Cardiac septum (tissue), 1 donor: ENCODE measurements at regions of chr12 and their contacts with region 1.

Region 1: DNA sequence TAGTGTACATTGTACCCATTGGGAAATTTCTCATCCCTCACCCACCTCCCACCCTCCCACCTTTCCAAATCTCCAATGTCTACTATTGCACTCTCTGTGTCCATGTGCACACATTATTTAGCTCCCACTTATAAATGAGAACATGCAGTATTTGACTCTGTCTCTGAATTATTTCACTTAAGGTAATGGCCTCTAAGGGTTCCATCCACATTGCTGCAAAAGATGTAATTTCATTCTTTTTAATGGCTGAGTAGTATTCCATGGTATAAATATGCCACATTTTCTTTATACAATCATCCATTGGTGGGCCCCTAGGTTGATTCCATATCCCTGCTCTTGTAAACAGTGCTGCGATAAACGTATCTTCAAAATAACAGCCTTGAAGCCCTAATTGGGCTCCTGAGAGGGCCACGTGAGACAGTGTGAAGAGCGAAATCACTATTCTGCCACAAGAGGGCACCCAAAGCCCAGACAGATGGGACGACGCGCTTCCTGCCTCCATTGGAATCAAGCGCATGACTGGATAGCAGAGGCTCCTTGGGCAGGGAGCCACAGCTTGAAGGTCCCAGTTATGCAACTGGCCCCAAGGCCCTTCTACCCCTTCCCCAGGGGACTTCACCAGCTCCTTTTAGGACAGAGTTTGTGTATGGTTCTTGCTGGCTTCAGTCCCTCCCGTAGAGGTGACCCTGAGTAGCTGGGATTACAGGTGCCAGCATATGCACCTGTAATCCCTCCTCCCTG is 21.3 kb upstream of the CD27 start:
- DNase-seq: peak; percentile 91

Region 2: DNA sequence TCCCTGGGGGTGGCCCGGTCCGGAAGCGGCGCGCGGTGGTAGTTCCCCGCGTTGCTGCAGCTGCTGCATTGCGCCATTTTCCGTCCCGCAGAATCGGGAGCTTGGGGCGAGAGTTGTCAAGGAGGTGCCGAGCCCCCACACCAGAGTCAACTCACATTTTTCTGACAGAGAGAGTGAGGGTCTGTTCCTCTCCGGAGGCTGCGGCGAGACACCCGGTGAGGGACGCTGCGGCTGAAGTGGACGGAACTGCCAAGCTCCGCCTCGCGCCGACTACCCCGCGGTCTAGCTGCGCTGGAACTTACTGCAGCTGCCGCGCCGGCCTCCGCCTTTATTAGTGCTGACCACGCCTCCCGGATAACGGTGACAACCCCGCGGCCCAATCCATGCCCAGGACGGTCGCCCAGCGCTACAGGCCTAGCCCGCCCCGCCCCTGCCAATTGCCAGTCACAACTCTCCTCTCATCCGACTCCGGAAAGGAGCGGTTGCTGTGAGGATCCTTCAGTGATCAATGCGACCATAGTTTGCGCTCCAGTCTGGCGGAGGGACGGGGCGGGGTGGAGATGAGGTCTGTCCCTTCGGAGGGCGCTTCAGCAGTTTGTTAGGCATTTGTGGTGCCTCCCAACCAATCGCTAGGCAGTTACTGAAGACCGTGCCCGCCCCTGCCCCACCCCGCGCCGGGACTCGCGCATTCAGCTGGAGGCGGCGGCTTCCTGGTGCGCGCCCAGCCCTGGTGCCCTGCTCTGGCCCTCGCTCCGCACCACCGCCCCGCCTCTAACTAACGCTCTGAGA is 47.1 kb after region 1 on chr12 and contains the start of gene VAMP1:
- intact Hi-C with region 1: loop called (anchors 1 kb)
- DNase-seq: peak; percentile 99
- total RNA-seq, gene VAMP1: 4.1 TPM

Region 3: DNA sequence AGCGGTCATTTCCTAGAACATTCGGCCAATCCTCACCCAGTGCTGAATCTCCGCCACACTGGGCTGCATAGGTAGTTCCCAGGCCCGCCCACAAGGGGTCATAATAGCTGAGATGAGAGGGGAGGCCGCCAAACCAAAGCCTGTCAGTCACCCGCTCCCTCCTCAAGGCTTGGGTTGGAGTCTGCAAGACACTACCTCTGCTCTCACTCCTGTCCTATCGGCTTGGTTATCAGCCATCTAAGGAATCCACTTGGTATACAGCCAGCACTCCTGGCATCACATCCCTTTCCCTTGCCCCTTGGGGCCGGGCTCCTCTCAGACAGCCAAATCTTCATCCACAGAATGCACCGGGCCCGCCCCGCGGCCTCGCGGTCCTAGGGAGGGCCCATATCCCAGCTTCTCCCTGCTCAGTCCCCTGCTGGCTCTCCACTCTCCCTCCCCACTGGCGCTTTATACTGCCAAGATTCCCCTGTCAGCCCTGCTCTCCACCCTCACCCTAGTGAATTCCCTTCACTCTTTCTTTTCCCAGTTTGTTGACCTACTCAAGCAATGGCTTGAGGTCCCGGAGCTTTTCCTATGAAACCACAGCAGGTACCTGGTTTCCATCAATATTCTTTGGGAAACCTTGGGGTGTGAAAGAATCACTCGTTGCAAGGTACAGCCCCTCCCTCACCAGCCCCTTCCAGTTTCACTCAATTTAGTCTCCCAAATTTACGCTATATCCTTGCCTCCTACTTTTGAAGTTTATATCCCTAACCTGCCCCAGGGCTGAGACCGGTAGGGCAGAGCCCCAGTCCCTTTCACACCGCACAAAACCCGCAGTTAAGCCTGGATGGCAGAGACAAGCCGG is 131.0 kb after region 1 on chr12:
- intact Hi-C with region 1: loop called (anchors 5 kb)
- DNase-seq: peak; percentile 92